ENCODE measurements at regions of chr16 and their contacts with region 1.

Region 1: DNA sequence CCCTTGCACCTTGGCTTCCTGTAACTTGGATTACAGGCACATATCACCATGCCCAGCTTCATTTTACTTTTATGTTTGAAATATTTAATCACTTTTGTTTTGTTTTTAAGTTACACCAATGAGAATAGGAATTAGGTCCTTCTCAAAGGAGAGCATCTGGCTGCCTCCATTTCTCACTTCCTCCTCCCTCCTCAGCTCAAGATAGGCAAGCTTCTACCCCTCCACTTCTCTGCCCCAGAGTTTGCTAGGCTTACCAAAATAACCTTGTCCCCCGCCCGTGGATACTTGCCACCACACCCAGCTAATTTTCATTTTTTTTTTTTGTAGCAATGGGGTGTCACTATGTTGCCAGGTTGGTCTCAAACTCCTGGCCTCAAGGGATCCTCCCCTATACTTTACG is 17.9 kb downstream of the GABARAPL2 start:
- DNase-seq: no peak
- H3K4me3 ChIP-seq: no peak overlapping the region
- H3K27ac ChIP-seq: no peak overlapping the region
- H3K4me1 ChIP-seq: no peaks in the 10 kb centered on the region
- H3K27me3 ChIP-seq: no peaks in the 10 kb centered on the region
- CTCF ChIP-seq: no peak
- EP300 ChIP-seq: no peak
- POLR2A ChIP-seq: no peak

Region 2: DNA sequence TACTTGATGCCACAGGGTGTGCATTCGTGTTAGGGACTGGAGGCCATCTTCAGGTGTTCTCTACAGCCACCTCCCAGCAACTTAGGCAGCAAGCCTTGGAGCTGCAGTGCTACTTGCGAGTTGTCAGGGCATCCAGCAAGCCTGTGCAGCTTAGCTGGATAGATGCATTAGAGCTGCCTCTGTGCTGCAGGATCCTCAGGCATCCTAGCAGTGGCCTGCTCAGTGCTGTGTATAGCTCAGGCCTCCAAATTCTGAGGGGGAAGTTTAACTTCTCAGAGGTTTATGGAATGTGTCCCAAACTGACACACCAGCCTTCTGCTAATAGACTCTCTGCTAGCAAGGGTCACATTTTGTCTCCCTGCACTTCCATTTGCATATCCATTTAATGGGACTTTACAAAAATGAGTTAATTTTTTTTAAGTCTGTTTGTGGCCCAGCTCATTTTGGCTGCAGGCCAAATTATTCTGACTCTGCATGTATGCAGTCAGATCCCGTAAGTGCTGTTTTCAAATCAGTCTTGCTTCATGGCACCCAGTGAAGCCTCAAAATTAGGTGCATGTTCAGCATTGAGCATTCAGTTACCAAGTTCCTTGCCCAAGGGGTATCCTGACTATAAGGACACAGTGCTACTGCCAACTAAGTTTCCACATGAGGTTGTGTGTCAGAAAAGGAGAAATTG is 11.1 kb before region 1 on chr16:
- in situ Hi-C with region 1: no loop called
- intact Hi-C with region 1: loop called (anchors 1 kb)
- DNase-seq: no peak
- H3K4me3 ChIP-seq: no peak overlapping the region
- H3K27ac ChIP-seq: no peak overlapping the region
- H3K4me1 ChIP-seq: peaks cover under 1 to 30% (median 4%) of the 10 kb centered on the region in 4 donors
- H3K27me3 ChIP-seq: no peaks in the 10 kb centered on the region
- CTCF ChIP-seq: no peak
- EP300 ChIP-seq: no peak
- POLR2A ChIP-seq: no peak

Measured in transverse colon (tissue), 4 donors.